ENCODE measurements at regions of chr12 and their contacts with region 1.

Region 1: GRCh38 chr12:100741084-100741711 is 53.4 kb upstream of the ANO4 start:
- DNase-seq: no peak
- ATAC-seq: no peak
- H3K4me3 Mint-ChIP-seq: no peak overlapping the region
- H3K27ac Mint-ChIP-seq: no peak overlapping the region
- H3K4me1 Mint-ChIP-seq: no peaks in the 10 kb centered on the region
- H3K27me3 Mint-ChIP-seq: peaks cover 3% of the 10 kb centered on the region
- CTCF ChIP-seq: no peak

Region 2: DNA sequence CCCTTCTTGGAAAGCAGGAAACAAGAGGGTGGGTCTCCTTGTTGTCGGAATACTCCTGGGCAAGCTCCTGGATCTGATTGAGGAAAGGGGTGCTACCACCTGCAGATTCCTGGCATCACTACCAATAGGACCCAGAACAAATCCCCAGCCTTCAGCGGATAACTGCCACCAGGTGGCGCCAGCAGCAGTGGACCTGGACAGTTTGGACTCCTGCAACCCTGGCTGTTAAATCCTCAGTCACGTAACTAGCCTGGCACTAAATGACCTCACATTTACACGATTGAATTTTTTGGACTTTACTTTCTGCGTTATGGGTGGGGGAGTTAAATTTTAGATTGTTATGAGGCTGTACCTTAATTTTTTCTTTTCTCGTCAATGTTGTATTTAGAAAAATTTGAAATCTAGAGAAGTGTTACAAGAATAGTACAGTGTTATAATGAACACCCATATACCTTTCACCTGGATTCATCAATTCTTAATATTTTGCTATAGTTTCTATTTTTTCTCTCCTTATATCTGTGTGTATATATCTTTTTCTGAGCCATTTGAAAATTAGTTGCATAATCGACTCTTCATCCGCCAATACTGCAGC is 72.2 kb before region 1 on chr12:
- CTCF ChIA-PET with region 1: no interaction called
- POLR2A ChIA-PET with region 1: no interaction called
- intact Hi-C with region 1: loop called (anchors 5 kb)
- DNase-seq: peak; percentile 30
- ATAC-seq: no peak
- H3K4me3 Mint-ChIP-seq: no peak overlapping the region
- H3K27ac Mint-ChIP-seq: no peak overlapping the region
- H3K4me1 Mint-ChIP-seq: no peaks in the 10 kb centered on the region
- H3K27me3 Mint-ChIP-seq: no peaks in the 10 kb centered on the region
- CTCF ChIP-seq: no peak